ENCODE measurements at regions of chr3 and their contacts with region 1.

Region 1: GRCh38 chr3:129824926-129825541 is 68.5 kb downstream of the TMCC1 start:
- DNase-seq: peak; percentile 32 to 69
- ATAC-seq: peak in 1 of 2 experiments; percentile 78; a peak in 3 of 6 replicates
- H3K4me3 ChIP-seq: no peak overlapping the region
- H3K27ac ChIP-seq: peak overlapping the region; percentile 23 to 42; a peak in 3 of 6 replicates
- H3K4me1 ChIP-seq: peaks cover 54% of the 10 kb centered on the region
- CTCF ChIP-seq: peak; percentile 81
- EP300 ChIP-seq: no peak
- POLR2A ChIP-seq: no peak
- RAD21 ChIP-seq: peak; percentile 86 to 87

Region 2: DNA sequence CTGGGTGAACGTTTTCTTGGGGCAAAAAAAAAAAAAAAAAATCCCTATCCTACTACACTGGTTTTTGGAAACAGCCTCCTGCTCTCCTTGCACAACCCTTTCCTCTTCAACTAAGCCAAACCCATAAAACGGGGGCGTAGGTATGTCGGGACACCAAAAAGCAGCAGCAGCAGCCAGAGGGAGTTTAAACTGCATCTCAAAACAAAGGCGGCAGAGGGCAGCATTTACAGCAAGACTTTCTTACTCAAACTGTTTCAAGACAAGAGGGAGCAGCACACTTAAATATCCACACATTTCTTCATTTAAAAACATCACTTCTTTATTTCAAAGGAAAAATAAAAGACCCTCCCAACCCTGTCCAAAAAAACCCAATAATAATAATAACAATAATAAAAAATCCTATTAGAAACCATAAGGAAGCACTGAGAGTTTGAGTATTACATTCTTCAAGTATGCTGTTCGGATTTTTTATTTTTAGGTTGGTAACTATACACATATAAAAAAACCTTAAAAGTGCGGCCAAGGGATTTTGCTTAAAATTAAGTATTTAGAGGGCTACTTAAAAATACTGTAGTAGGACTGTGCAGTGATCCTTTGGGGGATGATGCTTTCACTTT is 174.7 kb before region 1 on chr3:
- CTCF ChIA-PET with region 1: interaction called, 94 read pairs
- POLR2A ChIA-PET with region 1: no interaction called
- DNase-seq: peak; percentile 18 to 75
- ATAC-seq: peak; percentile 53 to 64; a peak in 4 of 6 replicates
- H3K4me3 ChIP-seq: no peak overlapping the region
- H3K27ac ChIP-seq: peak overlapping the region; percentile 93
- H3K4me1 ChIP-seq: peaks cover 64% of the 10 kb centered on the region
- CTCF ChIP-seq: peak; percentile 69
- EP300 ChIP-seq: no peak
- POLR2A ChIP-seq: no peak
- RAD21 ChIP-seq: peak; percentile 80 to 82

Region 3: DNA sequence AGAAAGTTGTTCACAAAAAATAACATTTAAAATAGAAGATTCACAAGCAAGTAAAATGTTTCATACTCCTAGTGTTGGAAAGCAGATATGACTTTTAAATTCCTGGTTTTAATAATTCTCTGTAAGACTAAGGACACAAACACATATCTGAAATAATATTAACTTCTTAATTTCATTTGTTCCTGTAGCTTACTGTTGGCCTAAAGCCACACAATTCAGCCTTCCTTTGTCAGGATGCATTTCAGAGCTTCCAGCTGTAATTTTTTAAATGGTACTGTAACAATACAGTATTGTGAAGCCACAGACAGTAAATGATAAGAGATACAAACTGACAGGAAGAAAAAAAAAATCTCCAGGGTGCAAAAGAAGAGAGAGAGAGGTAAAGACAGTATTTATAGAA is 15.7 kb before region 1 on chr3:
- CTCF ChIA-PET with region 1: interaction called, 22 read pairs
- POLR2A ChIA-PET with region 1: no interaction called
- DNase-seq: no peak
- ATAC-seq: no peak
- H3K4me3 ChIP-seq: no peak overlapping the region
- H3K27ac ChIP-seq: no peak overlapping the region
- H3K4me1 ChIP-seq: 0 out of 3 replicates have a peak, but pooled peaks cover 4% of the 10 kb centered on the region
- CTCF ChIP-seq: no peak
- EP300 ChIP-seq: no peak
- POLR2A ChIP-seq: no peak
- RAD21 ChIP-seq: no peak

Measured in A549 (cell line).